GM12878 (cell line): ENCODE measurements at regions of chr13 and their contacts with region 1.

Region 1: GRCh38 chr13:61255035-61255796 is 160.4 kb downstream of the PCDH20 start:
- DNase-seq: no peak
- ATAC-seq: no peak
- H3K4me3 ChIP-seq: no peak overlapping the region
- H3K27ac ChIP-seq: no peak overlapping the region
- H3K4me1 ChIP-seq: no peaks in the 10 kb centered on the region
- H3K27me3 ChIP-seq: no peaks in the 10 kb centered on the region
- CTCF ChIP-seq: 0 out of 6 replicates have a peak, but pooled peaks of 1 of the 3 experiments have one; percentile 0
- EP300 ChIP-seq: no peak
- POLR2A ChIP-seq: no peak
- RAD21 ChIP-seq: no peak

Region 2: DNA sequence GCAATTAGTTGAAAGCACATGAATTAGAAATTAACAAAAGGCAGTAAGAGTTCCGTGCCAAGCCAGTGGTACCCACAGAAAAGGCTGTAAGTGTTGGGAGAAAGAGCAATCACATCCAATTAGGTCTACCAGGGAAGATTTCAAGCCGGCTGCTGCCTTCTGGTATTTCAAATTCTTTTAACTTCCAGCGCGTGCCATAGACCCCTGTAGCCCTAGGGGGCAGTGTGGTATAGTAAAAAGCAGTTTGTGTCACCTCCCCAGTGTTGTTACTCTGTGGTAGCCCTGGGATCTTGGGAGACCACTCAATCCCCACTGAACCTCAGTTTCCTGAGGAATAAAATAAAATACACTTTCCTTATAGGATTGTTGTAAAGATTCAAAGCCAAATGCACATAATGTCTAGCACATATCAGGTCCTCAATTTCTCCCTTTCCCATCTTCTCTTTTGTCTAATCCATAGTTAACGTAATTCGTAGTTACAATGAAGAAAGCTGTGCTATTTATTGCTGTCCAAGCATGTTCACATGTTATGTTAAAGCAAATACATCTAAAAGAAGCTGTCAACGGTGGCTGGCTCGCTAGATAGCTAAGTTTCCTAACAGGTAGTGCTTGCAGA is 628.0 kb before region 1 on chr13:
- CTCF ChIA-PET with region 1: interaction called, 8 read pairs
- POLR2A ChIA-PET with region 1: no interaction called
- RAD21 ChIA-PET with region 1: no interaction called
- SMC1A ChIA-PET with region 1: no interaction called
- in situ Hi-C with region 1: no loop called
- intact Hi-C with region 1: loop called (anchors 10 kb)
- DNase-seq: no peak
- ATAC-seq: peak; percentile 95
- H3K4me3 ChIP-seq: no peak overlapping the region
- H3K27ac ChIP-seq: no peak overlapping the region
- H3K4me1 ChIP-seq: no peaks in the 10 kb centered on the region
- H3K27me3 ChIP-seq: no peaks in the 10 kb centered on the region
- CTCF ChIP-seq: peak; percentile 62 to 70 (median 69)
- EP300 ChIP-seq: no peak
- POLR2A ChIP-seq: no peak
- RAD21 ChIP-seq: peak; percentile 76

Region 3: DNA sequence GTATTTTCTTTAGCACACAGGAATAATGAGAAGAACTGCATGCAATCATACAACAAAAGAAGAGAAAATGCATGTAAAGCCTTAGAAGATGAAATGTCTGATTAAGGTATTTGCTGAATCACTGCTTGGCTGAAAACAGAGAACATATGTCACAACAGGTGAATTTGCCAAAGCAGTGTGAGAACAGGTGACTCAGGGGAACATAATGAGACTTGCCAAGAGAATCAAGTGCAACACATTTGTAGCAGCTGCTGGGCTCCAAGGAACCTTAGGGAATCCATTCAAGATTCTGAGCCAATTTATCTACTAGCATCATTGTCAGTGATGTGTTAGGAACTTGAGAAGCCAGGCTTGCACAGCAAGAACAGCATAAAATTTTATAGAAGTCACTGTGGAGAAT is 112.7 kb before region 1 on chr13:
- CTCF ChIA-PET with region 1: no interaction called
- POLR2A ChIA-PET with region 1: no interaction called
- RAD21 ChIA-PET with region 1: no interaction called
- SMC1A ChIA-PET with region 1: no interaction called
- in situ Hi-C with region 1: no loop called
- intact Hi-C with region 1: no loop called
- DNase-seq: no peak
- ATAC-seq: no peak
- H3K4me3 ChIP-seq: no peak overlapping the region
- H3K27ac ChIP-seq: no peak overlapping the region
- H3K4me1 ChIP-seq: no peaks in the 10 kb centered on the region
- H3K27me3 ChIP-seq: no peaks in the 10 kb centered on the region
- CTCF ChIP-seq: no peak
- EP300 ChIP-seq: no peak
- POLR2A ChIP-seq: no peak
- RAD21 ChIP-seq: no peak

Region 4: GRCh38 chr13:61275251-61275650 is 20.0 kb after region 1 on chr13:
- CTCF ChIA-PET with region 1: no interaction called
- POLR2A ChIA-PET with region 1: no interaction called
- RAD21 ChIA-PET with region 1: no interaction called
- SMC1A ChIA-PET with region 1: interaction called, 11 read pairs
- in situ Hi-C with region 1: no loop called
- intact Hi-C with region 1: no loop called
- DNase-seq: no peak
- ATAC-seq: no peak
- H3K4me3 ChIP-seq: no peak overlapping the region
- H3K27ac ChIP-seq: no peak overlapping the region
- H3K4me1 ChIP-seq: no peaks in the 10 kb centered on the region
- H3K27me3 ChIP-seq: no peaks in the 10 kb centered on the region
- CTCF ChIP-seq: no peak
- EP300 ChIP-seq: no peak
- POLR2A ChIP-seq: no peak
- RAD21 ChIP-seq: no peak

Region 5: DNA sequence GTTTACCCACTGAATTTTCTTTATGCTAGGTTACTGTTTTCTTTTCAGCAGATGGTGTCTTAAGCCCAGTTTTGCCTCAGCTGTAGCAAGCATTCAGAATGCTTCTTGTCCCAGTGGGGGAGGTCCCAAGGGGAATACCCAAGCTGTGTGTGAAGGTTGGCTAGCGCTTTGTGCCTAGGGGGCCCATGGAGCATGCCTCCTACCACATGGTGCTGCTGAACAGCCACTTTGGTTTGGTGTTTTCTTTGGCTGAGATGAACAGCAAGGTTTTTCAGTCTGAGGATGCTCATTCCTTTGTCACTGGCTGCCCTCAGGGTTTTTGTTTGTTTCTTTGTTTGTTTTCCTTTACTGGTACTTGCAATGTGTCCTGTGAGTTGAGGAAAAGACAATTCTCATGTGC is 61.4 kb after region 1 on chr13:
- CTCF ChIA-PET with region 1: no interaction called
- POLR2A ChIA-PET with region 1: no interaction called
- RAD21 ChIA-PET with region 1: no interaction called
- SMC1A ChIA-PET with region 1: no interaction called
- in situ Hi-C with region 1: no loop called
- intact Hi-C with region 1: loop called (anchors 10 kb)
- DNase-seq: no peak
- ATAC-seq: peak; percentile 48
- H3K4me3 ChIP-seq: no peak overlapping the region
- H3K27ac ChIP-seq: no peak overlapping the region
- H3K4me1 ChIP-seq: no peaks in the 10 kb centered on the region
- H3K27me3 ChIP-seq: no peaks in the 10 kb centered on the region
- CTCF ChIP-seq: no peak
- EP300 ChIP-seq: no peak
- POLR2A ChIP-seq: no peak
- RAD21 ChIP-seq: no peak

Region 6: GRCh38 chr13:61350351-61350750 is 95.1 kb after region 1 on chr13:
- CTCF ChIA-PET with region 1: no interaction called
- POLR2A ChIA-PET with region 1: no interaction called
- RAD21 ChIA-PET with region 1: no interaction called
- SMC1A ChIA-PET with region 1: no interaction called
- in situ Hi-C with region 1: no loop called
- intact Hi-C with region 1: no loop called
- DNase-seq: no peak
- ATAC-seq: no peak
- H3K4me3 ChIP-seq: no peak overlapping the region
- H3K27ac ChIP-seq: no peak overlapping the region
- H3K4me1 ChIP-seq: no peaks in the 10 kb centered on the region
- H3K27me3 ChIP-seq: no peaks in the 10 kb centered on the region
- CTCF ChIP-seq: no peak
- EP300 ChIP-seq: no peak
- POLR2A ChIP-seq: no peak
- RAD21 ChIP-seq: no peak

Region 7: DNA sequence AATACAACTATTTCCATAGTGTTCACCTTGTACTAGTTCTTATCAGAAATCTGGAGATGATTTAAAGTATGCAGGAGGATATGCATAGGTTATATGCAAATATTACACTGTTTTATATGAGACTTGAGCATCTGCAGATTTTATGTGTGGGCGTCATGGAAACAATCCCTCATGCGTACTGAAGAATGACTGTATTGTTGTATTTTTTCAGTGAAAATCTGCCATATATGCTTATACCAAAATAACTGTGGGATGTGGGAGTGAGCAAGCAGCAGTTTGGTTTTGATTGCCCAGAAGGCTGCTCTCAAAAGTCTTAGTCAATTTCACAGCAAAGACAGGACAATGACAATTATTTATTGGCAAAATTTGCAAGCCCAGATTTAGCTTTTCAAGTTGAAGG is 399.3 kb after region 1 on chr13:
- CTCF ChIA-PET with region 1: no interaction called
- POLR2A ChIA-PET with region 1: no interaction called
- RAD21 ChIA-PET with region 1: no interaction called
- SMC1A ChIA-PET with region 1: no interaction called
- in situ Hi-C with region 1: no loop called
- intact Hi-C with region 1: no loop called
- DNase-seq: no peak
- ATAC-seq: no peak
- H3K4me3 ChIP-seq: no peak overlapping the region
- H3K27ac ChIP-seq: no peak overlapping the region
- H3K4me1 ChIP-seq: no peaks in the 10 kb centered on the region
- H3K27me3 ChIP-seq: no peaks in the 10 kb centered on the region
- CTCF ChIP-seq: no peak
- EP300 ChIP-seq: no peak
- POLR2A ChIP-seq: no peak
- RAD21 ChIP-seq: no peak

Region 8: DNA sequence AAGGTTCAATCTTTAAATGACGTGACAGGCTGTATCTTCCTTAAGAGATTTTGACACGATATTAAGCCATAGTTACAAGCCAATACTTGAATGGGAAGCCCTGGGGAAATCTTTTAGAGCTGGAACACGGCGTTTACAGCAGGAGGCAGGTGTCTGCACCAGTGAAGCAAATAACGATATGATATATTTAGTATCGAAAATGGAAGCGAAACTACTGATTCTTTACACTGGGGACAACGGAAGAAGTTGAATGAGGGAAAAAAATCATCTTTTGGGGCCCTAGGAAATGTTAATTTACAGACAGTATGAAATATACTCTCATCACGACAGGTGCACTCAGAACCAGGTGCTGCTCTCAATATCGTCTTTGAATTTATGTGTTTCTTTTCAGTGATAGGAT is 954.3 kb after region 1 on chr13:
- CTCF ChIA-PET with region 1: no interaction called
- POLR2A ChIA-PET with region 1: no interaction called
- RAD21 ChIA-PET with region 1: no interaction called
- SMC1A ChIA-PET with region 1: no interaction called
- in situ Hi-C with region 1: no loop called
- intact Hi-C with region 1: loop called (anchors 10 kb)
- DNase-seq: peak; percentile 65
- ATAC-seq: peak; percentile 92
- H3K4me3 ChIP-seq: peak overlapping the region; percentile 43
- H3K27ac ChIP-seq: peak overlapping the region; percentile 84
- H3K4me1 ChIP-seq: peaks cover 10% of the 10 kb centered on the region
- H3K27me3 ChIP-seq: no peaks in the 10 kb centered on the region
- CTCF ChIP-seq: no peak
- EP300 ChIP-seq: peak; percentile 62 to 68; a peak in 2 of 4 replicates
- POLR2A ChIP-seq: no peak
- RAD21 ChIP-seq: peak; percentile 36; the same call in 1 of the 2 replicates